Activated T-helper 1 cell treated with anti-CD3 and anti-CD28 coated beads, Interleukin-12 subunit alpha, Interleukin-12 subunit beta, Interleukin-2, Interleukin-4 antibody, amounts not matched to agents 30 ng/mL and 10 ng/mL and 1 ng/mL, durations not matched to agents 14 hours and 24 hours and 36 hours (primary cell): ENCODE measurements at regions of chr11 and their contacts with region 1.

Region 1: GRCh38 chr11:67265633-67266423 is 445 bp upstream of the GRK2 start:
- DNase-seq: peak; percentile 76
- H3K4me3 Mint-ChIP-seq: peak overlapping the region; percentile 83
- H3K27ac Mint-ChIP-seq: peak overlapping the region; percentile 90
- H3K4me1 Mint-ChIP-seq: peaks cover 73% of the 10 kb centered on the region
- H3K27me3 Mint-ChIP-seq: no peaks in the 10 kb centered on the region

Region 2: GRCh38 chr11:67252831-67253239 is 13.0 kb before region 1 on chr11:
- intact Hi-C with region 1: loop called (anchors 1 kb)
- DNase-seq: no peak
- H3K4me3 Mint-ChIP-seq: no peak overlapping the region
- H3K27ac Mint-ChIP-seq: peak overlapping the region; percentile 30
- H3K4me1 Mint-ChIP-seq: peaks cover 55% of the 10 kb centered on the region
- H3K27me3 Mint-ChIP-seq: no peaks in the 10 kb centered on the region

Region 3: DNA sequence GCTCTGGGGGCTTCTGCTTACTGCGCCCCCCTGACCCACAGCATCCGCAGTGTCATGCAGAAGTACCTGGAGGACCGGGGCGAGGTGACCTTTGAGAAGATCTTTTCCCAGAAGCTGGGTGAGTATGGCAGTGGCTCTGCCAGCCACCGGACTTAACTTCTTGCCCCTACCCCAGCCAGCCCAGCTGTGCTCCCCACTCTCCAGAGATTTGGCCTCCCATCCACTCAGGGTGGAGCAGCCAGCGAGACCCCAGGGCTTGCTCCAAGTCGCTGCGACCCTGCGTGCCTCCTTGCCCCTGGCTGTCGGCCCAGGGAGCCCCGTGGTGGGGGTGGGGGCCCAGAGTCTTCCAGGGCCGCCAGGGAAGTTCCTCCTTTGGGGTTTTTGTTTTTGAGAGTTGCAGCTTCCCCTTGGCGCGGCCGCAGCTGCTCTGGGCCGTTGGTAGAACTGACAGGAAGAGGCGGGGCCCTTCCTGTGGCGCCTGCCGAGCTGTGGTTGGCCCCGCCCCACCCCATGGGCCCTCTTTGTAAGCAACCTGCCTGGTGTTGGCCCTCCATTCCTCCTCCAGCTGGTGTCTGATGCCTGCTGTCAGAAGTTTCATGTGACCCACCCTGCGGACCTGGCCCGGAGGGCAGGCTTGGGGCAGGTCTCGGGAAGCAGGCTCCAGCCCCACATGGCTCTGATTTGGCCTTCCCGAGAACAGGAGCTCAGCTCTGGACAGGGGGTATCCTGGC is 11.6 kb after region 1 on chr11:
- intact Hi-C with region 1: loop called (anchors 1 kb)
- DNase-seq: peak; percentile 87
- H3K4me3 Mint-ChIP-seq: peak overlapping the region; percentile 77
- H3K27ac Mint-ChIP-seq: peak overlapping the region; percentile 96
- H3K4me1 Mint-ChIP-seq: peaks cover 50% of the 10 kb centered on the region
- H3K27me3 Mint-ChIP-seq: no peaks in the 10 kb centered on the region

Region 4: GRCh38 chr11:67288452-67289225 is 22.8 kb after region 1 on chr11:
- intact Hi-C with region 1: loop called (anchors 1 kb)
- DNase-seq: peak; percentile 88
- H3K4me3 Mint-ChIP-seq: peak overlapping the region; percentile 77
- H3K27ac Mint-ChIP-seq: peak overlapping the region; percentile 97
- H3K4me1 Mint-ChIP-seq: peaks cover 36% of the 10 kb centered on the region
- H3K27me3 Mint-ChIP-seq: peaks cover 2% of the 10 kb centered on the region

Region 5: DNA sequence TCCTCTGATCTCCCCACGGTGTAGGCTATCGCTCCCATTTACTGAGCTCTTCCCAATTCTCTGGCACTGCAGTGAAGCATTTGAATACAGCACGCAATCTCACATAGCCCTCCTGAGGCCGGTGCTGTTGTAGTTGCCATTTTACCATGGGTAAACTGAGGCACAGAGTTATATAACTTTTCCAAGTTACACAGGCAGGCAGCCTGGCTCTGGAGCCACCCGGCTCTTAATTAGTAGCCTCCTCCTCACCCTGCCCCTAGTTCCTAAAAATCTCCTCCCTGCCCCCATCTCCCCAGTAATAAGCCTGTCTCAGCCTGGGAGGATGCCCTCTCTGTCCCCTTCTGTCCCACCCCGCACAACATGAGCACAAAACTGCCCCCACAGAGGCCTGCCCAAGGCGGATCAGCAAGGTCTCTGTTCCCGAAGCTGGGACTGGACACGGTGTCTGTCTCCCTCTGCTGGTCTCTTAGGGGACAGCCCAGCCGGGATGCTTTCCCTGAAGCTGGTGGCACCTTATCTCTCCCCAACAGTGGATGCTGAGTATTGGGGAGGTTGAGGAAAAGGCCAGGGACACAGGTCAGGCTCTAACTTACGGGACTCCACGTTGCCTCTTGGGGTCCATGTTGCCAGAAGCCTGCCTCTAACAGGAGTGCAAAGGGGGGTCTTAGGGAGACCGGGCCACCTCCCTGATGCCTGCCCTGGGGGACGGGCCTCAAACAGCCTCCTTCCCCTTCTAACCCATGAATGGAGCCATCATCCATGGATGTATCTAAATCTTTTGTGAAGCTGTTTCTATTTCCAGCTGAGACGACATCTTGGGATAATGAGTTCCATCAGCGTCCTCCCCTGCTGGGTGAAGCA is 116.7 kb after region 1 on chr11:
- intact Hi-C with region 1: loop called (anchors 1 kb)
- DNase-seq: peak; percentile 74
- H3K4me3 Mint-ChIP-seq: no peak overlapping the region
- H3K27ac Mint-ChIP-seq: no peak overlapping the region
- H3K4me1 Mint-ChIP-seq: peaks cover 5% of the 10 kb centered on the region
- H3K27me3 Mint-ChIP-seq: peaks cover 38% of the 10 kb centered on the region

Region 6: DNA sequence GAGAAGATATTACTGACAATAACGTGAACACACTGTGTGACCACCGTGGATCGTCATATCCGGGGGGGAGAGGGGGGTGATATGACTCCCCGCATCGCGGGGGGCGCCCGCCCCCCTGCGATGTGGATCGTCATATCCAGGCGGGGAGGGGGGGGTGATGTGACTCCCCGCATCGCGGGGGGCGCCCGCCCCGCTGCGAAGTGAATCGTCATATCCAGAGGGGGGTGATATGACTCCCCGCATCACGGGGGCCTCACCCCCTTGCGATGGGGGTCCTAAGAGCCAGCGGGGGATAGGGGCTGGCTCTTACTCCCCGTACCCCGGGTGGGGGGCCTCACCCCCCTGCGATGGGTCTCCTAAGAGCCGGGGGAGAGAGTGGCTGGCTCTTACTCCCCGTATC is 718.1 kb after region 1 on chr11:
- intact Hi-C with region 1: no loop called
- DNase-seq: no peak
- H3K4me3 Mint-ChIP-seq: no peak overlapping the region
- H3K27ac Mint-ChIP-seq: no peak overlapping the region
- H3K4me1 Mint-ChIP-seq: no peaks in the 10 kb centered on the region
- H3K27me3 Mint-ChIP-seq: peaks cover 5% of the 10 kb centered on the region